ENCODE measurements at regions of chr17 and their contacts with region 1.

Region 1: DNA sequence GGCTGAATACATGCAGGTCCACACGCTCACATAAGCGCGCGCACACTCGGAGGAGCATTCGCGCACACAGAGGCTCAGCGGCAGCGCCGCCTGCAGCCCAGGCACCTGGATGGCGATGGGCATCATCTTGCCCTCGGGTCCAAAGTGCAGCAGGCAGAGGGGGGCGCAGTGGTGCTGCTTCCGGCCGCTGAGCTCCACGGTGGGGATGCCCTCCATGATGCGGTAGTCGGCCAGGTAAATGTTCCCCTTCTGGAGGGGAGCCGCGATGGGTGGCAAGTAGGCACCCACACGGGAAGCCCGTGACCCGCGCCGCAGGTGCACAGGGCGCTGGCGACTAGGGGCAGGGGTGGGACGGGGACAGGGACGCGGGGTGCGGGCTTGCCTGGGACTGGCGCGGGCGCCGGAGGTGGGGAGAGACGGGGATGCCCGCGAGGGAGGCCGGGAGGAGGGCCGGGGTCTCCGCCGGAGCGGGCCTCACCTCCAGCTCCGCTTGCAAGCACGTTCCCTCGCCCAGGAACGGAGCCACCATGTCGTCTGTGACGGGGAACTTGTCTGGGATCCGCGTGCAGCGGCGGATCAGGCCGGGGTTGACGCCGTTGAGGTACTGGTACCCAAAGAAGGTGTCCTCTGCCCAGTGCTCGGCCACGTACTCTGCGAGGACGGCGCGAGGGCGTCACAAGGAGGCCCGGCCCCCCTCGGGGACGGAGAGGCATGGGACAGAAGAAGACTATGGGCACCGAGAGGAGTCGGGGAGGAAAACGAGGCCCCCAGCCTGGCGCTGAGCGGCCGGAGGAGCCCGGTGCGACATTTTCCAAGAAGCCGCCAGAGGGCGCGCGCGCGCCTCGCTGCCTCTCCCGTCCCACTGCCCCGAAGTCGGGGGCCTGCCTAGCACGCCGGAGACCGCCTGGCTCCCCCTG is 8.0 kb downstream of the ALOX12B start:
- DNase-seq: peak; percentile 64 to 93 (median 82)
- ATAC-seq: peak; percentile 83
- H3K4me3 ChIP-seq: peak overlapping the region; percentile 64 to 80
- H3K4me3 Mint-ChIP-seq: peak overlapping the region; percentile 90
- H3K27ac ChIP-seq: peak overlapping the region; percentile 57 to 71
- H3K27ac Mint-ChIP-seq: peak overlapping the region; percentile 91
- H3K4me1 ChIP-seq: peaks cover 7% of the 10 kb centered on the region
- H3K4me1 Mint-ChIP-seq: peaks cover 18% of the 10 kb centered on the region
- H3K27me3 ChIP-seq: peaks cover 2% of the 10 kb centered on the region in 2 experiments
- H3K27me3 Mint-ChIP-seq: peaks cover 6% of the 10 kb centered on the region
- CTCF ChIP-seq: peak; percentile 89

Region 2: DNA sequence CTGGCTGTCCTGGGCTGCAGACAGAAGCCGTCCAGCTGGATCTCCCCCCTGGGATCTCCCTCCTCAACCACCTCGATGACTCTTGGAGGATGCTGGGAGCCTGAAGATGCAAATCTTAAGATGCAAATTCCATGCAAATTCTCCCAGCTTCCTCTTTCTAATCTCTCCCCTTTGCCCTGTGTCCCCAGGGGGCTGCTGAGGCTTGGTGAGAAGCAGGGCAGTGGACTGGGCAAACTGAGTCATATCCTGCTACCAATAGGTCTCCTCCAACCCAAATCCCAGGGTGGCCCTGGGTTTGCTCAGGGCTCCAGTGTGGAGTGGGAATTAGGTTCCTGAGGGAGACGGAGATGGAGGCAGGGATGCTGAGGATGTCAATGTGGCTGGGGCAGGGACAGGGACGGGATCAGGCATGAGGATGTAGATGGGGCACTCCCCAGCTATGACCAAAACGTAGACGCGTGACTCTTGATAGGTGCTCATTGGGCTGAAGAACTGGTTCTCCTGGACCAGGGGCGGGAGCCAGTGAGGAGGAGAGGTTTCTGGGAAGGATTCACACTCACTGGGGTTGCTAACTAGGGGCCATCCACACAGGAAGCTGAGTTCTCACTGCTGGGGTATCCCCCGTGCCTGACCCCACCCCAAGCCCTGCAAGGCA is 11.6 kb after region 1 on chr17:
- CTCF ChIA-PET with region 1: interaction called, 163 read pairs
- POLR2A ChIA-PET with region 1: interaction called, 7 read pairs
- intact Hi-C with region 1: no loop called
- DNase-seq: peak in 1 of 9 experiments; percentile 28
- ATAC-seq: no peak
- H3K4me3 ChIP-seq: no peak overlapping the region
- H3K4me3 Mint-ChIP-seq: no peak overlapping the region
- H3K27ac ChIP-seq: no peak overlapping the region
- H3K27ac Mint-ChIP-seq: no peak overlapping the region
- H3K4me1 ChIP-seq: peaks cover 11% of the 10 kb centered on the region
- H3K4me1 Mint-ChIP-seq: peaks cover 8% of the 10 kb centered on the region
- H3K27me3 ChIP-seq: peaks cover 0 to 5% of the 10 kb centered on the region in 2 experiments
- H3K27me3 Mint-ChIP-seq: peaks cover 33% of the 10 kb centered on the region
- CTCF ChIP-seq: no peak